ENCODE measurements at regions of chr3 and their contacts with region 1.

Region 1: DNA sequence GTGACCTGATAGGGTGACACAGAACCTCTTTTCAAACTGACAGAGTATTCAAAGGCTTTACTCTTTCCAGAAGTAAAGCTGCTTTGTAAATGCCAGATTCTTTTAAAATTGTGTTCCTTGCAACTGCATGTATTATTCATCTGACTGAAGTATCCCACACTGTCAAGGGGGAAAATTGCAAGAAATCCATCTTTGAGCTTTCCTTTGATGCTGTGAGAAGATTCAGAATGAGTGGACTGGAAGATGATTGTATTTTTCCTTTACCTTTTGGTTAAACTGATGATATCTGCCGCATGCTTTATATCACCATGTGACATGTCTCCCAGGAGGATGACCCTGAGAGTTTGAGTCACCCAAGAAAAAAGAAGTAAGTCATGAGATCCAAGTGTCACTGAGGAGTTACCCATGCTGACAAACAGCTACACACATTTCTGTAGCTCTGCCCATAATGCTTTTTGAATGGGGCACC is 250.8 kb upstream of the CBLB start:
- DNase-seq: no peak
- H3K4me3 ChIP-seq: no peak overlapping the region
- H3K27ac ChIP-seq: no peak overlapping the region
- H3K4me1 ChIP-seq: peaks cover 65% of the 10 kb centered on the region
- H3K27me3 ChIP-seq: no peaks in the 10 kb centered on the region
- CTCF ChIP-seq: no peak

Region 2: GRCh38 chr3:106036696-106037095 is 83.0 kb before region 1 on chr3:
- CTCF ChIA-PET with region 1: no interaction called
- POLR2A ChIA-PET with region 1: interaction called, 12 read pairs
- intact Hi-C with region 1: no loop called
- DNase-seq: no peak
- H3K4me3 ChIP-seq: no peak overlapping the region
- H3K27ac ChIP-seq: no peak overlapping the region
- H3K4me1 ChIP-seq: no peaks in the 10 kb centered on the region
- H3K27me3 ChIP-seq: no peaks in the 10 kb centered on the region
- CTCF ChIP-seq: no peak

Region 3: DNA sequence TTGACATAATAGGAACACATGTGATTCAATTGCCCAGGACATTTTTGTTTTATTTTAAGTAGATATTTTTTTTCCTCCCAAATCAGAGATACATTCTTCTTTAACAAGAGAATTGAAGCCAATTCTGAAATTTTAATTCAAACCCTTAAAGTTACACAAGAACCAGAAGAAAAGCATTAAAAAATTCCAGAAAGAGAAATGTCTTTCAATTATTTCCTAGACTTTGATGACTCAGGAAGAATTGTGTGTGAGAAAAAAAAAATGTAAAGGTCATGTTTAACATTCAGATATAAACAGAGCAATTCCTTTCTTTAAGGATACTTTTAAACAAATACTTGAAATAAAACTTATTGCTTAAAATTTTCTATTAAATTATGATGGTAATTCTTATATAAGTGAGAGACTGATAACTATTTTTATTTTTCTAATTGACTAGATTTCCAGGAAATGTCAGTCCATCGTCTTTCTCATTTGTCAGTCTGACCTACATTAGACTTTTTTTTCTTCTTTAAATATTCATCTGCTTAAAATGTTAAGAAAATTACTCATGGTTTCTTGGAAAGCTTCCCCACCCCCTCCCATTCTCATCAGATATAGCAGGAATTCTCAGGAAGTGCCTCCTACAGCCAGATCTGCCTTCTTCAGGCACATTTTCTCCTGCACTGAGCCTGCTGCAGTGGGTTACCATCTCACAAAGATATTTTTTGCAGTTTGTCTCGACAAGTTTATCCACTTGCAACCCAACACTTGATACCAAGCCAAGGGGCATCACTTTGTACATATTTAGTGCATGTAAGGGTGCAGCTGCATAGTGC is 10.9 kb after region 1 on chr3:
- CTCF ChIA-PET with region 1: no interaction called
- POLR2A ChIA-PET with region 1: no interaction called
- intact Hi-C with region 1: no loop called
- DNase-seq: no peak
- H3K4me3 ChIP-seq: no peak overlapping the region
- H3K27ac ChIP-seq: no peak overlapping the region
- H3K4me1 ChIP-seq: peaks cover 9% of the 10 kb centered on the region; the same call in 1 of the 2 replicates
- H3K27me3 ChIP-seq: no peaks in the 10 kb centered on the region
- CTCF ChIP-seq: no peak

Region 4: DNA sequence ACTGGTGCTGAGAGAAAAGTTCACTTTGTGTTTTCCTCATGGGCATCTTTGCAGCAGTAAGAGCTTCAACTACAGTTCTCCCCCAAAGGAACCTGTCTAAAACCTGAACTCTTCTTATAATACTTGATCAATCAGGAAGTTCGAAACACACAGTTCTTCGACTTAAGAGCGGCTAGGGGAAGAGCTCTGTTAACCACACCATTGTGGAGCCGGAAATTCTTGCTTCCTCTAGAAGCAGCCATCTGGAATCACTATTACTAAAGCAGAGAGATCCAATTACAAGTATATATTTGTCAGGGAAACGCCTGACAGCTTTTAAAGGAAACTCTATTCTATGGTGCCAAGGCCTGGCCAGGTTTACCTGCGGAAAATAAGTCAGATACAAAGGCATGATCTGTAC is 86.5 kb after region 1 on chr3:
- CTCF ChIA-PET with region 1: no interaction called
- POLR2A ChIA-PET with region 1: no interaction called
- intact Hi-C with region 1: loop called (anchors 10 kb)
- DNase-seq: no peak
- H3K4me3 ChIP-seq: no peak overlapping the region
- H3K27ac ChIP-seq: no peak overlapping the region
- H3K4me1 ChIP-seq: 0 out of 2 replicates have a peak, but pooled peaks cover 4% of the 10 kb centered on the region
- H3K27me3 ChIP-seq: no peaks in the 10 kb centered on the region
- CTCF ChIP-seq: no peak

Region 5: GRCh38 chr3:106333911-106334618 is 214.4 kb after region 1 on chr3:
- CTCF ChIA-PET with region 1: no interaction called
- POLR2A ChIA-PET with region 1: no interaction called
- intact Hi-C with region 1: loop called (anchors 10 kb)
- DNase-seq: peak; percentile 30 to 97
- H3K4me3 ChIP-seq: peak overlapping the region; percentile 6; the same call in 1 of the 2 replicates
- H3K27ac ChIP-seq: peak overlapping the region; percentile 64
- H3K4me1 ChIP-seq: peaks cover 25% of the 10 kb centered on the region
- H3K27me3 ChIP-seq: no peaks in the 10 kb centered on the region
- CTCF ChIP-seq: no peak

Region 6: GRCh38 chr3:106355873-106356272 is 236.2 kb after region 1 on chr3:
- CTCF ChIA-PET with region 1: no interaction called
- POLR2A ChIA-PET with region 1: no interaction called
- intact Hi-C with region 1: no loop called
- DNase-seq: no peak
- H3K4me3 ChIP-seq: no peak overlapping the region
- H3K27ac ChIP-seq: no peak overlapping the region
- H3K4me1 ChIP-seq: no peaks in the 10 kb centered on the region
- H3K27me3 ChIP-seq: no peaks in the 10 kb centered on the region
- CTCF ChIP-seq: no peak

Measured in PC-9 (cell line).